Vagina (tissue), 2 donors: ENCODE measurements at regions of chr16 and their contacts with region 1.

Region 1: GRCh38 chr16:14013571-14014282 is 57.4 kb upstream of the MRTFB start:
- DNase-seq: no peak
- H3K4me3 ChIP-seq: no peak overlapping the region
- H3K27ac ChIP-seq: peak overlapping the region; percentile 54
- H3K4me1 ChIP-seq: peaks cover 54% of the 10 kb centered on the region
- H3K27me3 ChIP-seq: no peaks in the 10 kb centered on the region
- CTCF ChIP-seq: no peak
- POLR2A ChIP-seq: no peak

Region 2: DNA sequence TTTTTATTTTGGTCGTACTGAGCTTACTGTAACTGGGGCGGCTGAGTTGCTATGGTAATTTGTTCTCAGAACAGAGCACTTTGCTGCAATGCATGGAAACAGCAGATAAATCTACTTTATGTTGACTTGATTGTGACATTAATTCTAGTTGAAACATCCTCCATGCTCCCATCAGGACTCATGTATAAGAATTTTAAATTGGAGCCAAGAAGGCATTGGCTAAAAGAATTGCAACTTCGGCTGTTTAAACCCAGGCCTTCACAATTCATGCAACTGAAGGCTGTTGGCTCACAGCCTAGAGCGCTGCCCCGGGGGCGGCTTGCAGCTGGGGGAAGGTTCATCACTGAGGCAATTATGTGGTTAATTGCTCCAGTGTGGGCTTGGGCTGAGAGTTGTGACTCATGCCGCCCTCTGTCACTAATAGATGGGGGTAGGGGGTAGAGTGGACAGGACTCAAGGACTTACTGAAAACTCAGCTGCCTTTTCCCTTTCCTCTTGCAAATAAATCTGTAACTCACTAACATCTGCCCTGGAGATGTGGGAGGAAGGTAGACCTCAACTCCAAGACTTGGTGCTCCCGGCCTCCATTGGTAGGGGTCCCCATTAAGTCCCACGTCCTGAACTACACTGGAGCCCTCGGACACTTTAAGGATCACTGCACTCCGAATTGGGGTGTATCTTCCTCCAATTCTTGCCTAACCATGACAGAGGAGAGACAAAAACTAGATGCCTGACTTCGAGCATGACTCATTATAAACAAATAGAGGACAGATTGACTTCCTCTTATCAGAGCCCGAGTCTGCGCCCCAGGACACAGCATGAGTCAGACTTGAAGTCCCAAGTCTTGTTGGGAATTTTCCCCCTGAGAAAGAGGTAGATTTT is 56.3 kb before region 1 on chr16:
- intact Hi-C with region 1: loop called (anchors 10 kb)
- DNase-seq: peak in 1 of 2 donors; percentile 94
- H3K4me3 ChIP-seq: peak overlapping the region; percentile 26 to 39
- H3K27ac ChIP-seq: peak overlapping the region; percentile 76
- H3K4me1 ChIP-seq: peaks cover 31% of the 10 kb centered on the region
- H3K27me3 ChIP-seq: no peaks in the 10 kb centered on the region
- CTCF ChIP-seq: peak in 1 of 3 experiments; percentile 24
- POLR2A ChIP-seq: peak in 1 of 2 donors; percentile 1

Region 3: GRCh38 chr16:14186007-14186794 is 172.5 kb after region 1 on chr16:
- intact Hi-C with region 1: loop called (anchors 10 kb)
- DNase-seq: no peak
- H3K4me3 ChIP-seq: peak overlapping the region; percentile 46 to 50
- H3K27ac ChIP-seq: peak overlapping the region; percentile 80
- H3K4me1 ChIP-seq: peaks cover 31% of the 10 kb centered on the region
- H3K27me3 ChIP-seq: no peaks in the 10 kb centered on the region
- CTCF ChIP-seq: peak in 1 of 3 experiments; percentile 36
- POLR2A ChIP-seq: no peak

Region 4: GRCh38 chr16:15843635-15844279 is 1830.0 kb after region 1 on chr16:
- intact Hi-C with region 1: no loop called
- DNase-seq: no peak
- H3K4me3 ChIP-seq: no peak overlapping the region
- H3K27ac ChIP-seq: no peak overlapping the region
- H3K4me1 ChIP-seq: no peaks in the 10 kb centered on the region
- H3K27me3 ChIP-seq: no peaks in the 10 kb centered on the region
- CTCF ChIP-seq: no peak
- POLR2A ChIP-seq: no peak